ENCODE measurements at regions of chr5 and their contacts with region 1.

Region 1: DNA sequence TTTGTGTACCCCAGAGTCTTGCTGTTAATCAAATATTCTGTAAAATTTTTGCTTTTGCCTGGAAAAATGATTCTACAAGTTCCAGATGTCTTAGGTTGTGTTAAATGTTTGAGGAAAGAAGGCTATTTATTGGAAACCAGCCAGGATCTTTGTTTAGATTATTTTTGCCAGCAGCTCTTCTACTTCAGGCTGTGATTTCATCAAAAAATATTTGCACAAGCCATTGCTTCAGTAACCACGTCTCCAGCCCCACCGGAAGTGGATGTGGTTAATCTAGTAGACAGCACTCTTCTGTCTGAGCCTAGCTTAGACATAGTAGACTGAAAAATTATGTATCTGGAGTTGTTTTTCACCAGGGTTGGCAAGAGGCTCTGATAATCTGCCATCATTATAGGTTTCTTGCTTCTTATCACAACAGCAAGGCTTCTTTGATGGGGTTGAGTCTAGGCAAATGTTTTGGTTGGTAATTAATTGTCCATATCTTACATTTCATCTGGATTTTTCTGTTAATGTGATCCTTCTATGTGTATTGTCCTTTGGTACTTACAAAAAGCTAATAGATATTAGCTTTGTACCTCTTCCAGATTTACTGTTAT is 17.1 kb downstream of the KCTD16 start:
- DNase-seq: peak; percentile 63
- CTCF ChIP-seq: no peak

Region 2: GRCh38 chr5:142922223-142922952 is 1265.4 kb before region 1 on chr5:
- in situ Hi-C with region 1: loop called (anchors 10 kb)
- DNase-seq: peak; percentile 62
- CTCF ChIP-seq: peak; percentile 47

Region 3: GRCh38 chr5:144048259-144048856 is 139.4 kb before region 1 on chr5:
- in situ Hi-C with region 1: no loop called
- DNase-seq: no peak
- CTCF ChIP-seq: no peak

Region 4: GRCh38 chr5:144680711-144681110 is 492.9 kb after region 1 on chr5:
- in situ Hi-C with region 1: no loop called
- DNase-seq: no peak
- CTCF ChIP-seq: no peak